ENCODE measurements at regions of chr18 and their contacts with region 1.

Region 1: DNA sequence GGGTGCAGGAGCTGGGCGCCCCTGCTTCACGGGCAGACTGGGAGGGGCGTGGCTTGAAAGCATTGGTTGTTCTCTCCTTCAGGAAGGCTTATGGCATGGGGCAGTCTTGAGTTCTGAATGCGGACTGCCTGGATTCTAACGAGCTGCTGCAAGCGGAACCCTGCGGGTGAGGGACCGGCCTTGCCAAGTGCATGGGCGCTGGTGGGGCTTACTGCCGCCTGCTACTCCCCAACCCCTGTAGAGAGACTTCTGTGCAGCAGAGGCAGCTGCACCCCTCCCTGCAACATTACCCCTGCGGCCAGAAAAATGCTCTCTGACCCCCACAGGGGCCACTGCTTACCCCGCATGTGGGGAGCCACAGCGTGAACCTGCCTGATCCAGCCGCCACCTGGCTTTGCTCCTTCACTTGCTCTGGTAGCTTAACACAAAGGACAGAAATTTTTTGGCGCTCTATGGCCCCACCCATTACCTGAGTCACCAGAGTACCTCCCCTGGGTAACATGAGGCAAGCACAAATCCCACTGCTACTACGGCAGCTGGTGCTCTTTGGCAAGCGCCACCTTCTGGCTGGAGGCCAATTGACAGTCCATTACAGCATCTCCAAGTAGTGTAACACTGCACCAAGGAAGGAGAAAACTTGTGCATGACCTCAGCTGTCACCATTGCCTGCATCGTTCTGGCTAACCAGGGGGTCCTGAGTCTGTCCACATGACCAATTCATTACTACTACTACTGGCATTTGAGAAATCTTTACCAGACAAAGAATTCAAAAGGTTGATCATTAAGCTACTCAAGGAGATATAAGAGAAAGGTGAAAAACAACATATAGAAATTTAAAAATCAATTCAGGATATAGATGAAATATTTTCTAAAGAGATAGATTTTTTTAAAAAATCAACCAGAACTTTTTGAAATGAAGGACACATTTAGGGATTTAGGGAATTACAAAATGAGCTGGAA is 35.4 kb downstream of the MYL12B start:
- DNase-seq: peak; percentile 96
- H3K4me3 ChIP-seq: peak overlapping the region; percentile 71 to 98 (median 90)
- H3K27ac ChIP-seq: peak overlapping the region; percentile 95
- H3K4me1 ChIP-seq: no peaks in the 10 kb centered on the region
- H3K27me3 ChIP-seq: no peaks in the 10 kb centered on the region
- CTCF ChIP-seq: peak; percentile 75 to 100 (median 92); a peak in 3 of 4 replicates
- EP300 ChIP-seq: peak in 1 of 2 experiments; percentile 64; a peak in 1 of 3 replicates
- POLR2A ChIP-seq: peak; percentile 92 to 99
- RAD21 ChIP-seq: peak; percentile 56 to 58

Region 2: DNA sequence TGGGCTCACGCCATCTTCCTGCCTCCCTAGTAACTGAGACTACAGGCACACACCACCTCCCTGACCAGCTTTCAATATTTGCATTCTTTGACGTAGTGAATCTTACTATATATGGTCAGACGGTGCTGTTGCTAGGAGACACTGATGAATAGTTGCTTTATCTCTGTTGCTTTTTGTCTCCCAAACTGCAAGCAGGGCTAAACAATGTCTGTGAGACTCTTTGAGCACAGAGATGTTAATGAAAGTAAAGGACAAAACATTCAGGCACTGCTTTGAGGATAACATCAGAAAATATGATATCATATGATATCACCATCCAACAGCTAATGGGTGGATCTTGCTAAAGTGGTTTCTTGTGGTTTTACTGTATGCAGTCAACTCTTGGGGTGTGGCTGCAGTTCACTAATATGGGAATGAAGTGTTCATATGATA is 407.5 kb before region 1 on chr18:
- CTCF ChIA-PET with region 1: no interaction called
- POLR2A ChIA-PET with region 1: no interaction called
- DNase-seq: no peak
- H3K4me3 ChIP-seq: no peak overlapping the region
- H3K27ac ChIP-seq: no peak overlapping the region
- H3K4me1 ChIP-seq: peaks cover 0 to 3% (median under 1%) of the 10 kb centered on the region in 4 experiments; a peak in 2 of 7 replicates
- H3K27me3 ChIP-seq: no peaks in the 10 kb centered on the region
- CTCF ChIP-seq: no peak
- EP300 ChIP-seq: no peak
- POLR2A ChIP-seq: no peak
- RAD21 ChIP-seq: no peak

Region 3: GRCh38 chr18:3281456-3282400 is 15.6 kb before region 1 on chr18:
- CTCF ChIA-PET with region 1: interaction called, 12 read pairs
- POLR2A ChIA-PET with region 1: interaction called, 40 read pairs
- DNase-seq: no peak
- H3K4me3 ChIP-seq: no peak overlapping the region
- H3K27ac ChIP-seq: no peak overlapping the region
- H3K4me1 ChIP-seq: peaks cover 0 to 7% (median 2%) of the 10 kb centered on the region in 4 experiments; a peak in 3 of 7 replicates
- H3K27me3 ChIP-seq: no peaks in the 10 kb centered on the region
- CTCF ChIP-seq: peak in 2 of 3 experiments; percentile 34 to 53; a peak in 2 of 4 replicates
- EP300 ChIP-seq: no peak
- POLR2A ChIP-seq: no peak
- RAD21 ChIP-seq: peak; percentile 74 to 85

Region 4: GRCh38 chr18:3321133-3321812 is 24.0 kb after region 1 on chr18:
- CTCF ChIA-PET with region 1: interaction called, 27 read pairs
- POLR2A ChIA-PET with region 1: interaction called, 5 read pairs
- DNase-seq: no peak
- H3K4me3 ChIP-seq: no peak overlapping the region
- H3K27ac ChIP-seq: no peak overlapping the region
- H3K4me1 ChIP-seq: no peaks in the 10 kb centered on the region; a peak in 1 of 7 replicates
- H3K27me3 ChIP-seq: no peaks in the 10 kb centered on the region
- CTCF ChIP-seq: no peak
- EP300 ChIP-seq: no peak
- POLR2A ChIP-seq: no peak
- RAD21 ChIP-seq: no peak

Region 5: DNA sequence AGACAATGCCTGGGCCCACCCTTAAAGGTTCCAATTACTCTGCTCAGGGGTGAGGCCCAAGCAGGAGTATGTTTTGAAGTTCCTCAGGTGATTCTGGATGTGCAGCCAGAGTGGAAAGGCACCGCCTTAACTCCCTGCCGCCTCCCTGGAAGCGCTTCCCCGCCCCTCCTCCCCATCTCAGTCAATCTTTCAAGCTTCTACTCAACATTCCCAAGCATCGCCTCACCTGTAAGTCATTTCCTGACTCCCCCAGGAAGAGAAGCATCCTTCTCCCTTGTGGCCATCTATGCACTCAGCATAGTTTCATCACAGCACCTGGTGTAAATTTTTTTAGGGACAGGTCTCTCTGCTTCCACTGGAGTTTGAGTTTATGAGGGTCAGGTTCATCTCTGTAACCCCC is 32.2 kb after region 1 on chr18:
- CTCF ChIA-PET with region 1: interaction called, 27 read pairs
- POLR2A ChIA-PET with region 1: interaction called, 6 read pairs
- DNase-seq: no peak
- H3K4me3 ChIP-seq: no peak overlapping the region
- H3K27ac ChIP-seq: no peak overlapping the region
- H3K4me1 ChIP-seq: peaks cover 0 to 11% (median 3%) of the 10 kb centered on the region in 4 experiments; a peak in 3 of 7 replicates
- H3K27me3 ChIP-seq: no peaks in the 10 kb centered on the region
- CTCF ChIP-seq: no peak
- EP300 ChIP-seq: no peak
- POLR2A ChIP-seq: no peak
- RAD21 ChIP-seq: no peak